Naive thymus-derived CD4-positive, alpha-beta T cell (primary cell): ENCODE measurements at regions of chr12 and their contacts with region 1.

Region 1: DNA sequence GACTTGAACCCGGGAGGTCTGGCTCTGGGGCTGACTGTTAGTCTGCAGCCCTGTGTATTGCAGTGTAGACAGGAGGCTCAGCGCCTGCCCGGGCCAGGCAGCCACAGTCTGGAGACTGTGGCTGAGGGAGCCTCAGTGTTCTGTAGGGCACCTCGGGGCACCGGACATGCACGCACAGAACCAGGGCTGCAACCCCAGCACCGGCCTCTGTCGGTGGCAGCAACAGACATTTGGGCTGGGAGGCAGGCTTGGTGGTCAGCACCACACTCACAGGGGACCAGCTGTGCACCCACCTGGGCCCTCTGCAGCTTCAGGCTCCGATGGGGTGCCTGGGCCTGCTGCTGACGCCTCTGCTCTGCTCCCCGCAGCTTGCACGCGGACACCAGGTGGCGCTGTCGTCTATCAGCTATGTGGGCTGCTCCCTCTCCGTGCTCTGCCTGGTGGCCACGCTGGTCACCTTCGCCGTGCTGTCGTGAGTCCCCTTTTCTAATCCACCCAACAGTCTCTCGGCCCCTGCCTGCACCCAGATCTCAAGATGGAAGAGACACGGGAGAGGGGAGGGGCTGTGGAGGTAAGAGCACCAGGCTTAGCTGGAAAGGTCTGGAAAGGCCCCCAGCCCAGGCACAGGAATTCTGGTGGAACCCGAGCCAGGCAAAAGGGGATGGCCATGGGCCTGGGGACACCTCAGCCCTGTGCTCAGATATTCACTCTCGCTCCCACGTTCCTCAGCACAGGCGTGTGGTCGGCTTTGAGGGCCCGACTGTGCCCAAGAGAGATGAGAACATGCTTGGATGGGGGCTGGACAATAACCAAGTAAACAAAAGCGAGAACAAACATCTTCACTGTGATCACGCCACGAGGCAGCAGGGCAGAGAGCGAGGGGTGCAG is 151.0 kb downstream of the ADGRD1 start:
- DNase-seq: peak; percentile 48 to 86 (median 71)
- ATAC-seq: peak; percentile 77
- H3K4me3 ChIP-seq: no peak overlapping the region
- H3K4me3 Mint-ChIP-seq: peak overlapping the region in 7 of 10 donors; percentile 41 to 86 (median 67)
- H3K27ac ChIP-seq: no peak overlapping the region
- H3K27ac Mint-ChIP-seq: peak overlapping the region in 3 of 9 donors; percentile 46 to 65 (median 54)
- H3K4me1 ChIP-seq: peaks cover 0 to 18% of the 10 kb centered on the region in 2 donors
- H3K4me1 Mint-ChIP-seq: peaks cover 7 to 19% (median 17%) of the 10 kb centered on the region in 7 donors
- H3K27me3 ChIP-seq: no peaks in the 10 kb centered on the region
- H3K27me3 Mint-ChIP-seq: peaks cover 0 to 7% (median 0%) of the 10 kb centered on the region in 5 donors

Region 2: DNA sequence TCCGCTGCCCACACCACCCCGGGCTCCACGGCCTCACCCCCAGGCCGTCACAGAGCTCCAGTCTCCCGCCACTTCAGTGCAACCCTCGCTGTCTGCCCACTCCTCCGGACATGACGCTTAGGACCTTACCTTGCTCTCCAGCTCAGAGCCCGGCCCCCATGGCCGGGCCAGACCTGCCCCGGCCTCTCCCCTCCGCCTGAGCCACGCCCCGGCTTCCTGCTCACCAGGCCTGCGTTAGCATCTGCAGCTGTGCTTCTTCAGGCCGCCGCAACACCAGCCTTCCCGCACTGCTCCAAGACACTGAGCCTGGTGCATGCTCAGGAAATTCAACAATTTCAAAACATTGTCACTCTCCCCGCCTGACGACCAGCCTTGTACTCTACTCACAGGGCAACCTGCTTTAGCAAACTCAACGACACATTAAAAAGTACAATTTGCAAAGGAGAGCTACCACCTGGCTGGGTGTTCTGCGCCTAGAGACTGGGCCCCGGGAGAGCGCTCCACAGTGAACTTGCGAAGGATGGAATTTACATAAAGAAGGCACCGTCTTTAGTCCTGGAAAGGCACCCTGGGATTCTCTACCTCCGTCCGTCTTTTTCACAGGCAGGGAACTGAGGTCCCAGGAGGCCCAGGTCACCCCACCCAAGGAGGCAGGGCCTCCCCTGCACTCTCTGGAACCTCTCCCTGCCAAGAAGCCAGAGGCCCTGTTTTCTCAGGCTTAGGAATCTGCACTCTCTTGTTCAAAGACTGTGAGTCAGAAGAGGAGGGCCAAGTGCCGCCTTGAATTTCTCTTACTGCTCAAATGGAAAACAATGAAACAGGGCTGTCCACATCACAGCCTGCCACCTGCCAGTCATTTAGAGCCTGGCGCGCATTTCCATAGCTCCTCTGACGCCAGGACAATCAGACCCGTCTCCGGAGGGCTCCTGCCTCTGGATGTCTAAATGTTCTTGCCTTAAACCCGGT is 317.0 kb before region 1 on chr12:
- CTCF ChIA-PET with region 1: no interaction called
- POLR2A ChIA-PET with region 1: no interaction called
- intact Hi-C with region 1: no loop called
- DNase-seq: no peak
- ATAC-seq: no peak
- H3K4me3 ChIP-seq: no peak overlapping the region
- H3K4me3 Mint-ChIP-seq: no peak overlapping the region
- H3K27ac ChIP-seq: no peak overlapping the region
- H3K27ac Mint-ChIP-seq: no peak overlapping the region
- H3K4me1 ChIP-seq: no peaks in the 10 kb centered on the region
- H3K4me1 Mint-ChIP-seq: peaks cover 0 to 5% (median 0%) of the 10 kb centered on the region in 7 donors
- H3K27me3 ChIP-seq: no peaks in the 10 kb centered on the region
- H3K27me3 Mint-ChIP-seq: no peaks in the 10 kb centered on the region

Region 3: DNA sequence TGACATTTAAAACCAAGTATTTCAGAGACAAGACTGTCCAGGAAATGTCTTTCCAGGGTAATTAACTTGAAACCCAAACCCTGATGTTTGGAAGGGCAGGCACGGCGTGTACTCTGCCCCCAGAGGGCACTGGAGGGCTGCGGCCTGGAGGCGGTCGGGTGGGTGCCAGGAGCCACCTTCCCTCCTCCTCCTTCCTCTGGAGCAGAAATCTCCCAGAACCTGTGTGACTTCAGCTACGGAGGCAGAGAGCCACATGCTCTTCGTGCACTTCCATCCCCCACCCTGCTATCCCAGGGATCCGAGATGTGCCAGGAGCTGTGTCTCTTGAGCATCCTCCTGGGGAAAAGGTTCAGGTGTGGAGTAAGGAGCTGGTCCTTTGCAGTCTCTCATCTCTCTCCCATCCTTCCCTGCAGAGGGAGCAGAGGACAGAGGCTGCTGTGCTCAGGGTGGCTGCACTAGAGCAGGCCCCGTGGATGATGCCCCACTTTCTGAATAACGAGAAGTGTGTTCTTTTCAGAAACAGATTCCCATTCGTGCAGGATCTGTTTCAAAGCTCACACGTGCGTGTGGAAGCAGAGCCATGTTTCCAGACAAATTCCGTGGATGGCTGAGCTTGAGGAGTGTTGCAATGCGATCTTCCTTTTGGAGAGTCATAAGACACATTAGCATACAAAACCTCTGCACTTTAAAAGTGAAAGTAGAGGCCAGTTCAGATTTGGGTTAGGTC is 11.8 kb after region 1 on chr12:
- CTCF ChIA-PET with region 1: interaction called, 11 read pairs
- POLR2A ChIA-PET with region 1: no interaction called
- intact Hi-C with region 1: no loop called
- DNase-seq: no peak
- ATAC-seq: no peak
- H3K4me3 ChIP-seq: no peak overlapping the region
- H3K4me3 Mint-ChIP-seq: no peak overlapping the region
- H3K27ac ChIP-seq: no peak overlapping the region
- H3K27ac Mint-ChIP-seq: no peak overlapping the region
- H3K4me1 ChIP-seq: no peaks in the 10 kb centered on the region
- H3K4me1 Mint-ChIP-seq: no peaks in the 10 kb centered on the region
- H3K27me3 ChIP-seq: no peaks in the 10 kb centered on the region
- H3K27me3 Mint-ChIP-seq: peaks cover 0 to 18% (median 0%) of the 10 kb centered on the region in 5 donors

Region 4: GRCh38 chr12:131132118-131132892 is 27.6 kb after region 1 on chr12:
- CTCF ChIA-PET with region 1: interaction called, 23 read pairs
- POLR2A ChIA-PET with region 1: no interaction called
- intact Hi-C with region 1: loop called (anchors 1 kb)
- DNase-seq: peak; percentile 37 to 81 (median 66)
- ATAC-seq: peak; percentile 71
- H3K4me3 ChIP-seq: no peak overlapping the region
- H3K4me3 Mint-ChIP-seq: no peak overlapping the region
- H3K27ac ChIP-seq: no peak overlapping the region
- H3K27ac Mint-ChIP-seq: peak overlapping the region in 1 of 9 donors; percentile 5
- H3K4me1 ChIP-seq: no peaks in the 10 kb centered on the region
- H3K4me1 Mint-ChIP-seq: peaks cover 0 to 10% (median 0%) of the 10 kb centered on the region in 7 donors
- H3K27me3 ChIP-seq: no peaks in the 10 kb centered on the region
- H3K27me3 Mint-ChIP-seq: no peaks in the 10 kb centered on the region

Region 5: GRCh38 chr12:131407221-131408035 is 302.7 kb after region 1 on chr12:
- CTCF ChIA-PET with region 1: no interaction called
- POLR2A ChIA-PET with region 1: no interaction called
- intact Hi-C with region 1: no loop called
- DNase-seq: no peak
- ATAC-seq: no peak
- H3K4me3 ChIP-seq: no peak overlapping the region
- H3K4me3 Mint-ChIP-seq: no peak overlapping the region
- H3K27ac ChIP-seq: no peak overlapping the region
- H3K27ac Mint-ChIP-seq: no peak overlapping the region
- H3K4me1 ChIP-seq: no peaks in the 10 kb centered on the region
- H3K4me1 Mint-ChIP-seq: no peaks in the 10 kb centered on the region
- H3K27me3 ChIP-seq: no peaks in the 10 kb centered on the region
- H3K27me3 Mint-ChIP-seq: peaks cover 0 to 13% (median 7%) of the 10 kb centered on the region in 5 donors

Region 6: DNA sequence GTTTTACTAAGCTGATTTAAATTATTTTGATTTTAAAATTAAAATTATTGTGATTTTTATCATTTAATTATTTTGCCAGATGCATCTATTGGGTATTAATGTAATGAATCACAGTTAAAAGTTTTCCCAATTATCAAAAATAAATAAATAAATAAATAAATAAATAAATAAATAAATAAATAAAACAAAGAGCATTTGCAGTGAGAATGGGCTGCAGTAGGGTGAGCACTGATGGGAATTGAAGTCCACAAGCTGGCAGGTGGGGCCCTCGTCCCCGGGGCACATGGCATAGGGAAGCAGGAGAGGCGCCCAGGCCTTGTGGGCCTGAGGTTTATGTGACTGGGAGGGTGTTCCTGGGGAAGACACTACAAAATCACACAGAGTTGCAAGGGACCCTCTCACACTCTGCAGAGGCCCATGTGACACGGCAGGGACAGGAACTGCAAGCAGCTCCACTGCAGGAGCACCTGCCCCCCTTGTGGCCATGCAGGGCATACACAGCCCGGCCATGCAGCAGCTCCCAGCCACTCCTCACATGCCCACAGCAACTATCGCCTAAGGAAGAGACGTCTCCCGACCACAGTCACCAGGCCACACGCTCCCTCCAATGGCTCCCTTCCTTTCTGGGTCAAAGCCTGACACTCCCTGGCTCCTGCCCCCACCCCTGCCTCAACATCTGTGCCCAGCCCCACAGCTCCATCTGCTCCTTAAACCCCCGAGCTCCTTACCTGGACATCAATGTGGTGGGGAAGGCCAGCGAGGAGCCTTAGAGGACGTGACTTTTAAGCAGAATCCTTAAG is 349.9 kb after region 1 on chr12:
- CTCF ChIA-PET with region 1: no interaction called
- POLR2A ChIA-PET with region 1: no interaction called
- intact Hi-C with region 1: loop called in 1 of 2 experiments (anchors 5 kb)
- DNase-seq: peak in 4 of 9 donors; percentile 7 to 30 (median 26)
- ATAC-seq: peak; percentile 70
- H3K4me3 ChIP-seq: no peak overlapping the region
- H3K4me3 Mint-ChIP-seq: no peak overlapping the region
- H3K27ac ChIP-seq: no peak overlapping the region
- H3K27ac Mint-ChIP-seq: peak overlapping the region in 1 of 9 donors; percentile 42
- H3K4me1 ChIP-seq: no peaks in the 10 kb centered on the region
- H3K4me1 Mint-ChIP-seq: peaks cover 0 to 7% (median 0%) of the 10 kb centered on the region in 7 donors
- H3K27me3 ChIP-seq: no peaks in the 10 kb centered on the region
- H3K27me3 Mint-ChIP-seq: peaks cover 10 to 27% (median 21%) of the 10 kb centered on the region in 5 donors

Region 7: GRCh38 chr12:131830335-131830913 is 725.7 kb after region 1 on chr12:
- CTCF ChIA-PET with region 1: interaction called, 4 read pairs
- POLR2A ChIA-PET with region 1: no interaction called
- intact Hi-C with region 1: loop called in 1 of 2 experiments (anchors 2 kb)
- DNase-seq: peak in 4 of 9 donors; percentile 15 to 49 (median 36)
- ATAC-seq: peak; percentile 69
- H3K4me3 ChIP-seq: peak overlapping the region; percentile 13
- H3K4me3 Mint-ChIP-seq: peak overlapping the region; percentile 61 to 78 (median 72)
- H3K27ac ChIP-seq: no peak overlapping the region
- H3K27ac Mint-ChIP-seq: no peak overlapping the region
- H3K4me1 ChIP-seq: peaks cover 0 to 19% of the 10 kb centered on the region in 2 donors
- H3K4me1 Mint-ChIP-seq: peaks cover 4 to 14% (median 10%) of the 10 kb centered on the region in 7 donors
- H3K27me3 ChIP-seq: peaks cover 0 to 6% of the 10 kb centered on the region in 2 donors
- H3K27me3 Mint-ChIP-seq: peaks cover 30 to 52% (median 35%) of the 10 kb centered on the region in 5 donors

Region 8: DNA sequence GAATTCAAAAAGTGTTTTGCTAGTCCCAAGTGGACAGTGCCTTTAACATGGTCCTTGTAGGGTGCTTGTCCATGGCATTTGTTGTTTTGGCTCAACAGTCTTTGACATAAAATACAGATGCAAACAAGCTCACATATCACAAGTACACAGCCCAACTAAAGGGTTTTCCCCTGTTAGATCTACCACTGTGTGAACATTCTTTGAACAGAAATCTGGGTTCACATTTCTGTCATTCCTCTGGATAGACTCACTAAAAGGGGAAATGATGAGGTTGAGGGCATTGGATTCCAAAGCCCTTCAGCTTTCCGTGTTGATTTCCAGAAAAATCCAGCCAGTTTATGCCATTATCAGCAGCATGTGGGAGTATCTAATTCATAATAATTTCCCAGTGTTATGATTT is 899.1 kb after region 1 on chr12:
- CTCF ChIA-PET with region 1: interaction called, 7 read pairs
- POLR2A ChIA-PET with region 1: no interaction called
- intact Hi-C with region 1: loop called in 1 of 2 experiments (anchors 10 kb)
- DNase-seq: no peak
- ATAC-seq: no peak
- H3K4me3 ChIP-seq: no peak overlapping the region
- H3K4me3 Mint-ChIP-seq: no peak overlapping the region
- H3K27ac ChIP-seq: no peak overlapping the region
- H3K27ac Mint-ChIP-seq: no peak overlapping the region
- H3K4me1 ChIP-seq: no peaks in the 10 kb centered on the region
- H3K4me1 Mint-ChIP-seq: peaks cover 0 to 4% (median 0%) of the 10 kb centered on the region in 7 donors
- H3K27me3 ChIP-seq: no peaks in the 10 kb centered on the region
- H3K27me3 Mint-ChIP-seq: no peaks in the 10 kb centered on the region